Testis (tissue), 5 donors: ENCODE measurements at regions of chr19 and their contacts with region 1.

Region 1: DNA sequence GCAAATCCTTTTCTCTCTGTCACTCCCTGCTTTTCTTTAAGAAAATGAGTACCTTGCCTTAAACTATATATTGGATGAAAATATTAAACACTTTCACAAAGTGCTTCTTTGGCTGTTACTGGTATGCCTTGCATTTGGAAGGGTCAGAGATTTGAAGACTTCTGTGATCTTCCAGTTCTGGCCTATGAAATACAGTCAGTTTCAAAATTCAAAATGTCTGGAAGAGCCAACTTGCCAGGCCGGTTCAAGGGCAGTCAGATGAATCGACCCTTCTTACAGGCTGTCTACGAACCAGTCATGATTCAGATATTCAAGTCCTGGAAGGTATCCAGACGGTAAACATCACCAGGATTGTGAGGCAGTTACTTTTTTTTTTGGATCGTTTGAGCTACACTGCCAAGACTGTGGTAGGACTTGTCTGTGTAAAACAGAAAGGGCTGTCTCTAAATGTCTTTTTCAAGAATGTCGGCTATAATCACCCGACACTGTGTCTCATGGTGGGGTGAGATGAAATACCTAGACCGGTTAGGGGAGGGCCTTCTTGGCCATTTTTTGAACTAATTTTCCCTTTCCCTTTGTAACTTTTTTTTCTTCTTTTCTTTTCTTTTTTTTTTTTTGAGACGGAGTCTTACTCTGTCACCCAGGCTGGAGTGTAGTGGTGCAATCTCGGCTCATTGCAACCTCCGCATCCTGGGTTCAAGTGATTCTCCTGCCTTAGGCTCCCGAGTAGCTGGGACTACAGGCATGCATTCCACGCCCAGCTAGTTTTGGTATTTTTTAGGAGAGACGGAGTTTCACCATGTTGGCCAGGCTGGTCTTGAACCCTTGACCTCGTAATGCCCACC is 11.2 kb downstream of the ACTN4 start:
- DNase-seq: peak; percentile 71
- H3K4me3 ChIP-seq: no peak overlapping the region
- H3K27ac ChIP-seq: peak overlapping the region; percentile 83 to 89
- H3K4me1 ChIP-seq: peaks cover 79% of the 10 kb centered on the region
- H3K27me3 ChIP-seq: no peaks in the 10 kb centered on the region
- CTCF ChIP-seq: no peak
- POLR2A ChIP-seq: no peak

Region 2: DNA sequence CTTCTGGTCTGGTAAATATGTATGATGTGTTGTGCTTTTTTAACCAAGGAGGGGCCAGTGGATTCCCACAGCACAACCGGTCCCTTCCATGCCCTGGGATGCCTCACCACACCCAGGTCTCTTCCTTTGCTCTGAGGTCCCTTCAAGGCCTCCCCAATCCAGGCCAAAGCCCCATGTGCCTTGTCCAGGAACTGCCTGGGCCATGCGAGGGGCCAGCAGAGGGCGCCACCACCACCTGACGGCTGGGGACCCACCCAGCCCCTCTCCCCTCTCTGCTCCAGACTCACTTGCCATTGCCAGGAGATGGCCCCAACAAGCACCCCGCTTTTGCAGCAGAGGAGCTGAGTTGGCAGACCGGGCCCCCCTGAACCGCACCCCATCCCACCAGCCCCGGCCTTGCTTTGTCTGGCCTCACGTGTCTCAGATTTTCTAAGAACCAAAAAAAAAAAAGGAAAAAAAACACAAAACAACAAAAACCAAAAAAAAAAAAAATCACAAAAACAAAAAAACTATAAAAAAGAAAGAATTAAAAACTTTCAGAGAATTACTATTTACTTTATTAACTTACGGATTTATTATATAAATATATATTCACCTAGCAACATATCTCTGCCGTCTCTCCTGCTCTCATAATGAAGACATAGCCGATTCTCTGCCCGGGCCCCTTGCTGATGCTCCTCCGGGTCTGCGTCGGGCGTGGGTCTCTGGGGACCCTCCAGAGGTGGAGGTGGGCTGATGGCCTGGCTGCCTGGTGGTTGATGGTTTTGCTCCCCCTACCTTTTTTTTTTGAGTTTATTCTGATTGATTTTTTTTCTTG is 71.2 kb after region 1 on chr19:
- intact Hi-C with region 1: loop called (anchors 10 kb)
- DNase-seq: peak; percentile 80
- H3K4me3 ChIP-seq: no peak overlapping the region
- H3K27ac ChIP-seq: peak overlapping the region in 1 of 2 donors; percentile 50
- H3K4me1 ChIP-seq: peaks cover 27% of the 10 kb centered on the region
- H3K27me3 ChIP-seq: no peaks in the 10 kb centered on the region
- CTCF ChIP-seq: peak; percentile 57 to 79 (median 68)
- POLR2A ChIP-seq: no peak

Region 3: DNA sequence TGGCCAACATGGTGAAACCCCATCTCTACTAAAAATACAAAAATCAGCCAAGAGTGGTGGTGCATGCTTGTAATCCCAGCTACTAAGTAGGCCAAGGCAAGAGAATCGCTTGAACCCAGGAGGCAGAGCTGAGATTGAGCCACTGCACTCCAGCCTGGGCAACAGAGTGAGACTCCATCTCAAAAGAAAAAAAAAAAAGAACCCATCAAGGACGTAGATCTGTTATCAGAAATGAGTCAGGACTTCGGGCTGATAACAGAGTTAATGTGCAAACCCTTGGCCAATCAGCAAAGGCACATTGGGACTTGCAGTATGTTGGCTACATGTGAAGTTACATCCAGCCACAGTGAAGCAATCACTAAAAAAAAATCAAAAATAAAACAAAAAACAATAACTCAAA is 125.5 kb after region 1 on chr19:
- intact Hi-C with region 1: no loop called
- DNase-seq: no peak
- H3K4me3 ChIP-seq: no peak overlapping the region
- H3K27ac ChIP-seq: no peak overlapping the region
- H3K4me1 ChIP-seq: no peaks in the 10 kb centered on the region
- H3K27me3 ChIP-seq: no peaks in the 10 kb centered on the region
- CTCF ChIP-seq: no peak
- POLR2A ChIP-seq: no peak